Activated CD8-positive, alpha-beta T cell treated with anti-CD3 and anti-CD28 coated beads for 36 hours (primary cell): ENCODE measurements at regions of chr16 and their contacts with region 1.

Region 1: GRCh38 chr16:1782352-1783091 is at the starts of genes NUBP2 and SPSB3:
- DNase-seq: peak; percentile 100
- ATAC-seq: peak; percentile 93
- H3K4me3 Mint-ChIP-seq: peak within 1 kb of the TSS; percentile 93
- H3K27ac Mint-ChIP-seq: peak within 1 kb of the TSS; percentile 91
- H3K4me1 Mint-ChIP-seq: peaks cover 27% of the 10 kb centered on the region
- H3K27me3 Mint-ChIP-seq: no peaks in the 10 kb centered on the region
- CTCF ChIP-seq: no peak
- total RNA-seq, gene NUBP2: 43.5 to 45.0 TPM
- total RNA-seq, gene SPSB3: 14.4 to 15.2 TPM

Region 2: GRCh38 chr16:1763521-1764511 is 18.7 kb before region 1 on chr16:
- CTCF ChIA-PET with region 1: interaction called, 5 read pairs
- POLR2A ChIA-PET with region 1: interaction called, 14 read pairs
- intact Hi-C with region 1: no loop called
- DNase-seq: no peak
- ATAC-seq: peak; percentile 12
- H3K4me3 Mint-ChIP-seq: no peak overlapping the region
- H3K27ac Mint-ChIP-seq: no peak overlapping the region
- H3K4me1 Mint-ChIP-seq: no peaks in the 10 kb centered on the region
- H3K27me3 Mint-ChIP-seq: no peaks in the 10 kb centered on the region
- CTCF ChIP-seq: no peak

Region 3: GRCh38 chr16:1820096-1820945 is 37.8 kb after region 1 on chr16:
- CTCF ChIA-PET with region 1: no interaction called
- POLR2A ChIA-PET with region 1: no interaction called
- intact Hi-C with region 1: no loop called
- DNase-seq: no peak
- ATAC-seq: no peak
- H3K4me3 Mint-ChIP-seq: no peak overlapping the region
- H3K27ac Mint-ChIP-seq: no peak overlapping the region
- H3K4me1 Mint-ChIP-seq: peaks cover 10% of the 10 kb centered on the region
- H3K27me3 Mint-ChIP-seq: no peaks in the 10 kb centered on the region
- CTCF ChIP-seq: no peak

Region 4: GRCh38 chr16:1929578-1930337 is 147.2 kb after region 1 on chr16:
- CTCF ChIA-PET with region 1: interaction called, 14 read pairs
- POLR2A ChIA-PET with region 1: no interaction called
- intact Hi-C with region 1: no loop called
- DNase-seq: peak; percentile 92
- ATAC-seq: peak; percentile 98
- H3K4me3 Mint-ChIP-seq: peak overlapping the region; percentile 67
- H3K27ac Mint-ChIP-seq: no peak overlapping the region
- H3K4me1 Mint-ChIP-seq: peaks cover 2% of the 10 kb centered on the region
- H3K27me3 Mint-ChIP-seq: no peaks in the 10 kb centered on the region
- CTCF ChIP-seq: peak; percentile 98